CD8-positive, alpha-beta memory T cell (primary cell): ENCODE measurements at regions of chr3 and their contacts with region 1.

Region 1: DNA sequence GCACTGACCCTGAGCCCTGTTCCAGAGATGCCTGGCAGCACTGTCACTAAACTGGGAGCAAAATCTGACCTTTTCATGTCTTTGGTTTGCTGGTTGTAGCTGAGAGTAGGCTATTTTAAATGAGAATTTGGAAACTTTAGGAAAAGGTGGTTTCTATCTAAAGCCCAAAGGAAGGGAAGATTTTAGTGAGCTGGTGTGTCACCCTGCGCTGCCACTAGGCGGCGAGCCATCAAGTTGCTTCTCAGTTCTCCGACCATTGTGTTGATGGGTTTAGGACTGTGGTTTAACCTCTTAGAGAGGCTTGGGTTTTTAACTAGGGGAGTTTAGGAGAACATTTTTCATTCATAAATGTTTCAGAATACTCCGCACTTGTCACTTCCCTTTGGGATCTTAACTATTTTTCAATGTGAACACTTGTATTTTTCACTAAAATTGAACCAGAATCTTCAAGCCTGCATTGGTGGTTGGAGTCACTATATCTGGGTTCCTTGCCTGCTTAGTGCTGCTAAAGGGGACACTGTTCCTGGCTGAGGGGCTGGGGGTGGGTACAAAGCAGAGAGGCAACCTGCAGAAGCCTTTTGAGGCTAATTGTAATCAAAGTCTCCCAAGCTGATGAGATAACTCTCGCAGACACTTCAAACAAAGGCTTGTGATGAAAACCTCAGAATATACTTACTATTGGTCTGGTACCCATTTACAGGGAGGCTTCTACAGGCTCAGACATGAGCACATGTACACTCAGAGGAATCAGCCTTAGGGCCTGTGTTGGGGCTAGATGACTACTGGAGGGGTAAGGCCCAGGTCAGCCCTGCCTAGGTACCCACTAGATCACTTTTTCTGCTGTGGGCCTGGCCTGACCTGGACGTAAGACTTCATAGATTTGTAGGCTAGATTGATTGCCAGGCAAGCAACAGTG is 16.8 kb downstream of the EXOSC7 start:
- DNase-seq: no peak
- H3K4me3 ChIP-seq: no peak overlapping the region
- H3K4me3 Mint-ChIP-seq: no peak overlapping the region
- H3K27ac ChIP-seq: no peak overlapping the region
- H3K27ac Mint-ChIP-seq: peak overlapping the region in 4 of 8 donors; percentile 19 to 73 (median 56)
- H3K4me1 ChIP-seq: peaks cover 26% of the 10 kb centered on the region
- H3K4me1 Mint-ChIP-seq: peaks cover 21 to 62% (median 43%) of the 10 kb centered on the region in 3 donors
- H3K27me3 ChIP-seq: no peaks in the 10 kb centered on the region
- H3K27me3 Mint-ChIP-seq: no peaks in the 10 kb centered on the region

Region 2: DNA sequence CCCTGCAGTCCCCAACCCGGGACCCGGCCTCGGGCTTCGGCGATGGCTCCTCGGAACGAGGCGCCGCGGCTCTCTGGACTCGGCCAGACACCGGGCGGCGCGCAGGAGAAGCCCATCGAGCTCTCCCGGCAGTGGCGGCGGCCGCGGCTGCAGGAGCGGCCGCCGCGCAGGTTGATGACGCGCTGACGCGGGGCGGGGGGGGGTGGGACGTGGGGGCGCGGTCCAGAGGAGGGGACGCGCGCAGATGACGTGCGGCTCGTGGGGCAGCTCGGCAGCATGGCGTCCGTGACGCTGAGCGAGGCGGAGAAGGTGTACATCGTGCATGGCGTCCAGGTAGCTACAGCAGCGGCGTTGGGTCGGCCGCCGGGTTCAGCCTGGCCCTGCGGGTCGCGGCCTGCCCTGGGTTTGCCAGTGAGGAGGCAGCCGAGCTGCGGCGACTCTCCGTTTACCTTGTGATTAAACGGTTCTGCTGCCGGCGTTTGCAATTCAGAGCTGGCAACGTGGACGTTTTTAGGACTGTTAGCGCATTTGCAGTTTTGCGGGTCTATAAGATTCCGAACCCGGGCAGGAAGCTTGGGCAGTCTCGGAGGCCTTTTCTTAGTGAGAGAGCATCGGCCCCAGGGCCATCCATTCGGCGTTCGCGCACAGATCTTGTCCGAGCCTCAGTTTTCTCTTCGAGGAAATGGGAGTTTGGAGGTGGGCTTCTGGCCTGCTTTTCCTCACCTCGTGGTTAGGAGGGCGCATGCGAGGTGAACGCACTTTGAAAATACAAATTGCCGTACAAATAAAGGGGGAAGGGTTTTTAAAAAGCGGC is 16.6 kb before region 1 on chr3 and contains the starts of genes EXOSC7 and ZDHHC3:
- CTCF ChIA-PET with region 1: interaction called, 13 read pairs
- POLR2A ChIA-PET with region 1: no interaction called
- DNase-seq: peak; percentile 82 to 91 (median 83)
- H3K4me3 ChIP-seq: peak within 1 kb of the TSS; percentile 96
- H3K4me3 Mint-ChIP-seq: peak within 1 kb of the TSS; percentile 91 to 100 (median 94)
- H3K27ac ChIP-seq: peak within 1 kb of the TSS; percentile 92
- H3K27ac Mint-ChIP-seq: peak within 1 kb of the TSS; percentile 84 to 98 (median 95)
- H3K4me1 ChIP-seq: peaks cover 52% of the 10 kb centered on the region
- H3K4me1 Mint-ChIP-seq: peaks cover 59 to 75% (median 71%) of the 10 kb centered on the region in 3 donors
- H3K27me3 ChIP-seq: no peaks in the 10 kb centered on the region
- H3K27me3 Mint-ChIP-seq: peaks cover 0 to 2% of the 10 kb centered on the region in 2 donors
- total RNA-seq, gene EXOSC7: 86.4 to 89.6 TPM
- total RNA-seq, gene ZDHHC3: 40.9 to 41.8 TPM